ENCODE measurements at regions of chr14 and their contacts with region 1.

Region 1: GRCh38 chr14:67704484-67705089 is 2.9 kb downstream of the RDH12 start:
- DNase-seq: no peak
- H3K4me3 ChIP-seq: no peak overlapping the region
- H3K27me3 ChIP-seq: no peaks in the 10 kb centered on the region
- CTCF ChIP-seq: peak; percentile 79

Region 2: DNA sequence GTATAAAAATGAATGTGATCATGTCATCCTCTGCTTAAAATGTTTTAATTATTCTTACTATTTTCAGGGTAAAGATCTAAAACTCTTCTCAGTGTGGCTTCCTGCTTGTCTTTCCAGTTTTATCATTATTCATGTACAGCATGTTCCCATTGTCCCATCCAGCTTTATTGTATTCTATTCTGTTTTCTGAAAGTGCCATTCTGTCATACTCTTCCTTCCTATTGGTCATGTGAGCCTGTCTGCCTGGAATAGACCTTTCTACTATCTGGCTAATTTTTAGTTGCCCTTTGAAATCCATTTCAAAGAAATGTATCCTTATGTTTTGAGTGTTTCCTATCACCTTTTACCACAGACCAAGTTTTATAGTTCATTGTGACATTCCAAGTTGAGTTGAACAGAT is 428.5 kb before region 1 on chr14:
- CTCF ChIA-PET with region 1: no interaction called
- POLR2A ChIA-PET with region 1: no interaction called
- DNase-seq: no peak
- H3K4me3 ChIP-seq: no peak overlapping the region
- H3K27me3 ChIP-seq: no peaks in the 10 kb centered on the region
- CTCF ChIP-seq: no peak

Region 3: GRCh38 chr14:67426983-67427606 is 277.5 kb before region 1 on chr14:
- CTCF ChIA-PET with region 1: interaction called, 35 read pairs
- POLR2A ChIA-PET with region 1: no interaction called
- DNase-seq: no peak
- H3K4me3 ChIP-seq: no peak overlapping the region
- H3K27me3 ChIP-seq: no peaks in the 10 kb centered on the region; the same call in 1 of the 2 replicates
- CTCF ChIP-seq: peak; percentile 88

Region 4: GRCh38 chr14:67532998-67533753 is 171.4 kb before region 1 on chr14 and contains the start of gene PLEKHH1:
- CTCF ChIA-PET with region 1: interaction called, 28 read pairs
- POLR2A ChIA-PET with region 1: no interaction called
- DNase-seq: no peak
- H3K4me3 ChIP-seq: peak within 1 kb of the TSS; percentile 47
- H3K27me3 ChIP-seq: peaks cover 2% of the 10 kb centered on the region; the same call in 1 of the 2 replicates
- CTCF ChIP-seq: no peak
- polyA plus RNA-seq, gene PLEKHH1: 0.16 and 0.53 TPM in 2 replicates

Region 5: DNA sequence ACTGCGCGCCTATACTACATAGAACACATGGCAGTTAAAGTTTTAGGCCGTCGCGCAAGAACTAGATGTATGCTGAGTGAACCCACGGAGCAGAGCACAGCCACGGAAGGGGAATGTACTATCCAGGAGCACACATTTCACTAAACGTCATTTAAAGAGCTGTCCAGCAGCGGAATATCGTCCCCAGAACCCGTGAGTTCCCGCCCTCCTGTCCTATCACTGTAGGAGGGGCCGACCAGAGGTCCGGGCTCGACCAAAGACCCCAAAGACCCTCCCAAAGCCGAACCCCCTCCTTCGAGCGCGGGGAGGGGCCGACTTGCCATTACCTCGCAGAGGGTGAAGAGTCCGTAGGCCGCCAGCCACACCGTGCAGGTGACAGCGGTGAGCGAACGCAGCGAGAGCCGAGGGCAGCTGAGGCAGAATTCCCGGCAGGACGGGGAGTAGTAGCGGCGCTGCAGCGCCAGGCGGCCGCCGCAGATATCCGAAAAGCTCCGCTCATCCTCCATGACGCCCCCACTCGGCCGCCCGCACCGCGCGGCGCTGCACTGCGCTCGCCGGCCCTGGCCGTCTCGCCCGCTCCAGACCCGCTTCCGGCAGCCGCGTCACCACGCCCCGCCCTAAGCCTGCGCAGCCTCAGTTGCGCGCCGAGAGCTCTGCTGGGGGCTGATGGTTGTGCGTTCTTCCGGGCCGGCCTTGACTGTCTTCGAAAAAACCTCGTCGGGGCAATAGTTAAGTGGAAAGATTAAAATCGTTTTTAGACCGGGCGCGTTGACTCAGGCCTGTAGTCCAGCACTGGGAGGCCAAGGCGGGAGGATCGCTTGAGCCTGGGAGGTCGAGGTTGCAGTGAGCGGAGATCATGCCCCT is 104.7 kb before region 1 on chr14 and contains the start of gene PIGH:
- CTCF ChIA-PET with region 1: interaction called, 16 read pairs
- POLR2A ChIA-PET with region 1: no interaction called
- DNase-seq: peak; percentile 17
- H3K4me3 ChIP-seq: peak within 1 kb of the TSS; percentile 94
- H3K27me3 ChIP-seq: no peaks in the 10 kb centered on the region; the same call in 1 of the 2 replicates
- CTCF ChIP-seq: peak; percentile 57
- polyA plus RNA-seq, gene PIGH: 18.3 and 19.0 TPM in 2 replicates

Region 6: GRCh38 chr14:67666750-67667449 is 37.7 kb before region 1 on chr14:
- CTCF ChIA-PET with region 1: interaction called, 11 read pairs
- POLR2A ChIA-PET with region 1: no interaction called
- DNase-seq: no peak
- H3K4me3 ChIP-seq: no peak overlapping the region
- H3K27me3 ChIP-seq: no peaks in the 10 kb centered on the region
- CTCF ChIP-seq: peak; percentile 65

Region 7: GRCh38 chr14:67722293-67722692 is 17.7 kb after region 1 on chr14:
- CTCF ChIA-PET with region 1: interaction called, 14 read pairs
- POLR2A ChIA-PET with region 1: no interaction called
- DNase-seq: no peak
- H3K4me3 ChIP-seq: no peak overlapping the region
- H3K27me3 ChIP-seq: peaks cover 15% of the 10 kb centered on the region
- CTCF ChIP-seq: no peak

Measured in BJ (cell line).